Activated CD4-positive, alpha-beta T cell treated with anti-CD3 and anti-CD28 coated beads for 36 hours (primary cell): ENCODE measurements at regions of chr15 and their contacts with region 1.

Region 1: GRCh38 chr15:100588638-100589242 is 13.2 kb downstream of the LINS1 start:
- DNase-seq: no peak
- ATAC-seq: no peak
- H3K4me3 Mint-ChIP-seq: no peak overlapping the region
- H3K27ac Mint-ChIP-seq: no peak overlapping the region
- H3K4me1 Mint-ChIP-seq: peaks cover 64% of the 10 kb centered on the region
- H3K27me3 Mint-ChIP-seq: no peaks in the 10 kb centered on the region

Region 2: DNA sequence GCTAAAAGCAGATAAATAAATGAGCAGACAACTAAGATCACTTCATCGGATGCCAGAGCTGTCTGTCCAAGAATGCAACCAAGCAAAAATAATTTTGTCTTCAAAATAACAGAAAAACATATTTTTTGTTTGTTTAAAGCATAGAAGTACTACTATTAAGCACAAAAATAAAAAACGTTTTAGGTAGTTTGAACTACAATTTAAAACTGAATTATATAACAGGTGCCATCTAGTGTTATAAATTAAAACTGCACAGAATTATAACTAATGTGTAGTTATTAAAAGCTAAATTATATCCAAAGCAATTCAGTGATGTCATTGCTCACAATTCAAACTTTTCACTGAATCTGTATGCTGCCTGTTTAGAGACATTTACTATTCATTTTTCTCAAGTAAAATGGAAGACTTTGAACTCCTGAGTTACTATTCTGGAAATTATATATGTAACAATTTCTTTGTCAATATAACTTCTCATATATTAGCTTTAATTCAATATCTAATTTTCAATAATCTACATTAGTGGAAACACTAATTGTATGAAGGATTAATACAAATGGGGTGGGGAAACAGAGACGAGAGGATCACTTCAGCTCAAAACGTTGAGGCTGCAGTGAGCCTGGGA is 16.3 kb before region 1 on chr15:
- CTCF ChIA-PET with region 1: interaction called, 8 read pairs
- POLR2A ChIA-PET with region 1: no interaction called
- intact Hi-C with region 1: loop called in 1 of 2 experiments (anchors 2 kb)
- DNase-seq: no peak
- ATAC-seq: no peak
- H3K4me3 Mint-ChIP-seq: no peak overlapping the region
- H3K27ac Mint-ChIP-seq: peak overlapping the region; percentile 65
- H3K4me1 Mint-ChIP-seq: peaks cover 55% of the 10 kb centered on the region
- H3K27me3 Mint-ChIP-seq: no peaks in the 10 kb centered on the region

Region 3: DNA sequence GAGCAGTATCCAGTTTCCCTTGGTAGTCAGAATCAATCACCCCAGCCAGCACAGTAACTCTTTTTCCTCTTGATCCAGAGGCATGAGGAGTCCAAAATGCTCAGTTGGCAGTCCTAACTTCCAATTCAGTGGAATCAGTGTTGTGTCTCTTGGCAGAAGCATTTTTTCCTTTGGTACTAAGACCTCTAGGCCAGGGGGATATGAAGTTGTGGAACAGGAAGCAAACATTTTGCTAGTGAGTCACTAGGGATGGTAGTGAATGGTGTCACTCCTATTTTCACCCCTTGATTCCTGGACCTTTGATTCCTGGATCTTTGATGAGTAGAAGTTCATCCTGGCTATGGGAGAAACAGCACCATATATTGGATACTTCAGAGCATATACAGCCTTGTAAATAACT is 220.4 kb after region 1 on chr15:
- CTCF ChIA-PET with region 1: no interaction called
- POLR2A ChIA-PET with region 1: no interaction called
- intact Hi-C with region 1: no loop called
- DNase-seq: no peak
- ATAC-seq: no peak
- H3K4me3 Mint-ChIP-seq: no peak overlapping the region
- H3K27ac Mint-ChIP-seq: no peak overlapping the region
- H3K4me1 Mint-ChIP-seq: no peaks in the 10 kb centered on the region
- H3K27me3 Mint-ChIP-seq: peaks cover 2% of the 10 kb centered on the region